CD8-positive, alpha-beta T cell (primary cell): ENCODE measurements at regions of chr5 and their contacts with region 1.

Region 1: DNA sequence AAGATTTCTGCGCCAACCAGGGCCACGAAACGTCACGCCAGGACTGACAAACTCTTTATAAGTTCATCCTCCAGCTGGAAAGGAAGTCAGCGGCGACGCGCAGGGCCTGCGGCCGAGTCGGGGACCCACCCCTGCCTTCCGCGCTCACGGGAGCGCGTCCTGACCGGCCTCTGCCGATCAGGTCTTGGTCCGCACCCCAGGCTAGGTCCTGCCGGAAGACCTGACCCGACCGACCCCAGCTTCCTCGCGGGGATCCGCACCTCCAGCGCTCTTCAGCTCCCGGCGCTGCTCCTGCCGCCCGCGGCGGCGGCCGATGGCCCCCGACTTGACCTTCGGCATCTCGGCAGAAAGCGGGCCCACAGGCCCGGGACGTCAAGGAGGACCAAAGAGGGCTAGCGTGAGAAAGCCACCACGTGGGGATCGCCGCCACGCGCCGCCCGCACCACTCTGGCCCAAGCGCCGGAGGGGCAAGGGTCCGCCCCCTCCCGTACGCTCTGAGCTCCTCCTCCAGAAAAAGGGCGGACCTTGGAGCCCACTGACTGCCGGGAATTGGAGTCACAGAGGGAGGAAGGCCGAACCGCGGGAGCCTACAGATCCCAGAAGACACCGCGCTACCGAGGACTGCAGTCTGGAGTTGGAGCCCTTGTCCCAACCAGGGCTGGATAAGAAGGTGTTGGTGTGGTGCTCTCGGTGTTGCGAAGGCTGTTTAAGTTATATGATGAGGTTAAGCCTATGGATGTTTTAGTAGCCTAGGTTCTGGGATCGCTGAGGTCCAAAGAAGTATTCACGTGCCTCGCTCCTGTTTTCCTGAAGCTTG is at the start of gene DIMT1:
- DNase-seq: peak; percentile 81 to 96 (median 91)
- ATAC-seq: peak; percentile 98
- H3K4me3 ChIP-seq: peak within 1 kb of the TSS; percentile 91 to 99
- H3K4me3 Mint-ChIP-seq: peak within 1 kb of the TSS; percentile 96
- H3K27ac ChIP-seq: peak within 1 kb of the TSS; percentile 94 to 95
- H3K27ac Mint-ChIP-seq: peak within 1 kb of the TSS; percentile 93
- H3K4me1 ChIP-seq: peaks cover 12% of the 10 kb centered on the region
- H3K4me1 Mint-ChIP-seq: peaks cover 30% of the 10 kb centered on the region
- H3K27me3 ChIP-seq: no peaks in the 10 kb centered on the region
- H3K27me3 Mint-ChIP-seq: no peaks in the 10 kb centered on the region
- CTCF ChIP-seq: no peak
- total RNA-seq, gene DIMT1: 22.8 to 23.7 TPM

Region 2: GRCh38 chr5:62041156-62041756 is 362.4 kb before region 1 on chr5:
- CTCF ChIA-PET with region 1: no interaction called
- POLR2A ChIA-PET with region 1: no interaction called
- intact Hi-C with region 1: no loop called
- DNase-seq: no peak
- ATAC-seq: no peak
- H3K4me3 ChIP-seq: no peak overlapping the region
- H3K4me3 Mint-ChIP-seq: no peak overlapping the region
- H3K27ac ChIP-seq: no peak overlapping the region
- H3K27ac Mint-ChIP-seq: no peak overlapping the region
- H3K4me1 ChIP-seq: no peaks in the 10 kb centered on the region
- H3K4me1 Mint-ChIP-seq: no peaks in the 10 kb centered on the region
- H3K27me3 ChIP-seq: no peaks in the 10 kb centered on the region
- H3K27me3 Mint-ChIP-seq: peaks cover 2% of the 10 kb centered on the region
- CTCF ChIP-seq: no peak

Region 3: DNA sequence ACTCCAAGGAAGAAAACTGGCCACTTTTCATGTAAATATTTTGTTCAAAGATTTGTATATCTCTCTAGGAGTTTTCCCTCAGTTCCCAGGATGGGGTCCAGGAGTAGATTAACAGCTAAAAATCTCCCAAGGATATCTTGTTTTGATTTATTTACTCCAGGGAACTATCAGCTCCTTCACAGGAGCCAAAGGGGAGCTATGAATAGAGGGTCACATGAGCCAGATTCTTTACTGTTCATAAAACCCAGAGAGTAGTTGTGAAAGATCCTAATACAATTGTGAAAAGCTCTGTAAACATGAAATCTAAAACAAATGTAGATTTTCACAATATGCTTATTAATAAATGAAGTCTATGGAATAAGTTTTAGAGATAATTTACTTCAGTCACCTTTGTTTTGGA is 16.8 kb before region 1 on chr5:
- CTCF ChIA-PET with region 1: interaction called, 3 read pairs
- POLR2A ChIA-PET with region 1: interaction called, 15 read pairs
- intact Hi-C with region 1: no loop called
- DNase-seq: no peak
- ATAC-seq: no peak
- H3K4me3 ChIP-seq: no peak overlapping the region
- H3K4me3 Mint-ChIP-seq: no peak overlapping the region
- H3K27ac ChIP-seq: no peak overlapping the region
- H3K27ac Mint-ChIP-seq: peak overlapping the region; percentile 18
- H3K4me1 ChIP-seq: no peaks in the 10 kb centered on the region
- H3K4me1 Mint-ChIP-seq: peaks cover 8% of the 10 kb centered on the region
- H3K27me3 ChIP-seq: no peaks in the 10 kb centered on the region
- H3K27me3 Mint-ChIP-seq: no peaks in the 10 kb centered on the region
- CTCF ChIP-seq: no peak

Region 4: DNA sequence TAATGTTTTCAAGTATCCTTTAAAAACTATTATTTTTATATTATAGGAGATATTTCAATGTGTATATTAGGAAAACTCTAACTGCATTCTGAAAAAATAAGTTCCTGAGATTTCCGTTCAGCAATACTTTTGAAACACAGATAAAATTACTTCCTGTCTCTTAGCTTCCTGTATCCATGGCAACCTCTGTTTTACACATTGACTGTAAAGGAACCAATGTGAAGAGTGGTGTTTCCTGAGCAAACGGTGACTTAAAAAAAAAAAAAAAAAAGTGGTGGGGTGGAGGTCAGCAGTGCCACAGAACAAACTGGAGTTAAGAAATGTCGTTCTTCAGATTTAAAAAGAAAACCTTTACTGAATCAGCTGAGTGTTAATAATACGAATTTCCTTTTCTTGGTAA is 174.9 kb after region 1 on chr5 and contains the start of gene LRRC70:
- CTCF ChIA-PET with region 1: no interaction called
- POLR2A ChIA-PET with region 1: no interaction called
- intact Hi-C with region 1: loop called in 1 of 2 experiments (anchors 2 kb)
- DNase-seq: peak in 3 of 9 experiments; percentile 14 to 91 (median 81)
- ATAC-seq: peak; percentile 94
- H3K4me3 ChIP-seq: no peak within 1 kb of the TSS
- H3K4me3 Mint-ChIP-seq: peak within 1 kb of the TSS; percentile 74
- H3K27ac ChIP-seq: peak within 1 kb of the TSS; percentile 12 to 62
- H3K27ac Mint-ChIP-seq: peak within 1 kb of the TSS; percentile 83
- H3K4me1 ChIP-seq: peaks cover 3% of the 10 kb centered on the region
- H3K4me1 Mint-ChIP-seq: peaks cover 32% of the 10 kb centered on the region
- H3K27me3 ChIP-seq: no peaks in the 10 kb centered on the region
- H3K27me3 Mint-ChIP-seq: no peaks in the 10 kb centered on the region
- CTCF ChIP-seq: no peak
- total RNA-seq, gene LRRC70: 3.4 to 3.5 TPM